CD14-positive monocyte (primary cell): ENCODE measurements at regions of chr11 and their contacts with region 1.

Region 1: GRCh38 chr11:78290293-78291176 is 101.8 kb downstream of the USP35 start:
- DNase-seq: peak; percentile 97 to 100 (median 99)
- H3K4me3 ChIP-seq: peak overlapping the region in 1 of 3 experiments; percentile 60
- H3K4me3 Mint-ChIP-seq: peak overlapping the region; percentile 45 to 82
- H3K27ac ChIP-seq: peak overlapping the region; percentile 83 to 99
- H3K27ac Mint-ChIP-seq: peak overlapping the region; percentile 98 to 99 (median 99)
- H3K4me1 ChIP-seq: peaks cover 66 to 81% of the 10 kb centered on the region in 2 donors
- H3K4me1 Mint-ChIP-seq: peaks cover 78% of the 10 kb centered on the region
- H3K27me3 ChIP-seq: no peaks in the 10 kb centered on the region
- H3K27me3 Mint-ChIP-seq: no peaks in the 10 kb centered on the region
- CTCF ChIP-seq: no peak

Region 2: DNA sequence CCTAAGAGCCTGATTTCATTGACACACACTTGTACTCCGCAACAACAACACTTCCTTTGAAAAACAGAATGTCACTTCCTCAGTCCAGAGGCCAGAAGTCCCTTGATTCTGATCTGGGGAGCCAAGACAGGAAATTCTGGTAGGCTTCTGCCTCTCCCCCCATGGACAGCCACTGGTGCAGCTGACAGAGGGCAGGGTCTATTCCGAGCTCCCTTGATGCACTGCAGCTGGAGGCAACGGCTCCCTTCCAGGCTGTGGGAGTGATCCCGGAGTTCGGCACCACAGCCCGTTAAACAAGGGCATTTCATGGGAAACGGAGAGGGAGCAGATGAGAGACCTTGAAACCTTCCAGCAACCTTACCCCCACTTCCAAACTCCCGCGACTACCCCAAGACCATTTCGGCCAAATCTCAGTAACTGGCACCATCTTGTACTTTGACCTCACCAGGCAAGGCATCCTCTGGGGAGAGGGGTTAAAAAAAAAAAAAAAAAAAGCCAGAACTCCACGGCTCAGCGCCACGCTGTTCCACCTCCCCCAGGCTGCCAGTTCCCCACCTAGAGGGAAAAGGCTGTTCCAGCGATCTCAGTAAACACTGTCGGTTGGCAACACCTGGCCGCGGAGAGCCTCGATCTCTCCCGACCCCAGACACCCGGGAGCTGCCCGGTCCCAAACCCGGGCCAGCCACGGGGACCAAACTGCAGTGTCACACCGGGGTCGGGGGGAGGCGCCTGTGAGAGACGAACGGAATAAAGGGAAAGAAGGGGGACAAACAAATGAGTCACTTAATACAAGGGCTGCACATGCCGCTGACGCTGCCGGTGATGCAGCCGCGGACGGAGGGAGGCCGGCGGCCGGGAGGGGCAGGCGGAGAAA is 126.0 kb after region 1 on chr11:
- intact Hi-C with region 1: loop called in 1 of 2 experiments (anchors 5 kb)
- DNase-seq: peak; percentile 91 to 95 (median 95)
- H3K4me3 ChIP-seq: peak overlapping the region; percentile 47 to 94 (median 84)
- H3K4me3 Mint-ChIP-seq: peak overlapping the region; percentile 95 to 96
- H3K27ac ChIP-seq: peak overlapping the region; percentile 98 to 100
- H3K27ac Mint-ChIP-seq: peak overlapping the region; percentile 98 to 100 (median 99)
- H3K4me1 ChIP-seq: peaks cover 70 to 80% of the 10 kb centered on the region in 2 donors
- H3K4me1 Mint-ChIP-seq: peaks cover 74% of the 10 kb centered on the region
- H3K27me3 ChIP-seq: no peaks in the 10 kb centered on the region
- H3K27me3 Mint-ChIP-seq: peaks cover 0 to 8% (median 0%) of the 10 kb centered on the region in 3 donors
- CTCF ChIP-seq: peak; percentile 59

Region 3: GRCh38 chr11:78424334-78425270 is 134.1 kb after region 1 on chr11:
- intact Hi-C with region 1: loop called (anchors 5 kb)
- DNase-seq: peak; percentile 85 to 90 (median 89)
- H3K4me3 ChIP-seq: peak overlapping the region; percentile 13 to 64 (median 26)
- H3K4me3 Mint-ChIP-seq: peak overlapping the region; percentile 66 to 90
- H3K27ac ChIP-seq: peak overlapping the region; percentile 82 to 95
- H3K27ac Mint-ChIP-seq: peak overlapping the region; percentile 98 to 100 (median 99)
- H3K4me1 ChIP-seq: peaks cover 80 to 99% of the 10 kb centered on the region in 2 donors
- H3K4me1 Mint-ChIP-seq: peaks cover 90% of the 10 kb centered on the region
- H3K27me3 ChIP-seq: no peaks in the 10 kb centered on the region
- H3K27me3 Mint-ChIP-seq: peaks cover 0 to 2% (median 2%) of the 10 kb centered on the region in 3 donors
- CTCF ChIP-seq: no peak